ENCODE measurements at regions of chr17 and their contacts with region 1.

Region 1: DNA sequence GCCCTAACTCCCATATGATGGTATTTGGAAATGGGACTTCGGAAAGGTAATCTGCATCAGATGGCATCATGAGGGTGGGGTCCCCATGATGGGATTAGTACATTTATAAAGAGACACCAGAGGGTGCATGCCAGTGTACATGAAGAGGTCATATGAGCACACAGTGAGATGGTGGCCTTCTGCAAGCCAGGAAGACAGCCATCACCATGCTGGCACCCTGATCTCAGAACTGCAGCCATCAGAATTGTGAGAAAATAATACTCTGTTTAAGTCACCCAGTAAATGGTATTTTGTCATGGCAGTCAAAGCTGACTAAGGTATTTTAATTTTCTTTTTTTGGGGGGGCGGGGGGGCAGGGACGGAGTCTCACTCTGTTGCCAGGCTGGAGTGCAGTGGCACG is 47.1 kb upstream of the ABCA10 start:
- DNase-seq: no peak
- ATAC-seq: no peak

Region 2: DNA sequence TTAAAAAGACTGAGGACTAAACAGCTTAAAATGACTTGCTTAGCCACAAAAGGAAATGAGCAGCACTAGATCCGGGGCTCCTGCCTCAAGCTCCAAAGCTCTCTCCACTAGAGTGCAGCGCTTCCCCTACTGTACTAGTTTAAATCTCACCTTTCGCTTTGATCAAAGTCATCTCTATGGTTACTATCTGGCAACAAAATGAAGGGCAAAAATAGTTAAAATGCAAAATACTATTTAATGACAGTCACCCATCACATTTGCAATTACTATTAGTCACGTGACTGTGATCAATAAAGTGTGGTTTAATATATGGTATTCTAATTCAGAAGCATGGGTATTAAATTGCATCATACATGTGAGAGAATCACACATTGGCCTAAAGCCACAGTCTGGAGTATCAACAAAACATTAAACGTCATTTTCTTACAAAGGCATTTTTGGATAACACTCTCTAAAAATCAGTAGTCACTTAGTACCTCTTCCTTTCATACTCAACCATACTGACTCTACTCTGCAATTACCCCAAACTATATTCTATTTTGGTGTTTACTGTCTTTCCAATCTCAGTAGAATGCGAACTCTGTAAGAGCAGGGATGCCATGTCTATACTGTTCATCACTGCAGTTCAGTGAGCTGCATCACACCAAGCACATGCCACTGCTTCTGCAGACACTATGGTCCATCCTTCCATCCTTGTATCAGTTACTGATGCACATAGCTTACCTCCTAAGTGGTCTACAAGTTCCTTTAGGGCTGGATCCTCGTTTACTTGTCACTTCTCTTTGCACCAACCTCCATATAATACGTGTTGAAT is 1915.6 kb before region 1 on chr17:
- intact Hi-C with region 1: loop called (anchors 10 kb)
- DNase-seq: no peak
- ATAC-seq: no peak

Region 3: DNA sequence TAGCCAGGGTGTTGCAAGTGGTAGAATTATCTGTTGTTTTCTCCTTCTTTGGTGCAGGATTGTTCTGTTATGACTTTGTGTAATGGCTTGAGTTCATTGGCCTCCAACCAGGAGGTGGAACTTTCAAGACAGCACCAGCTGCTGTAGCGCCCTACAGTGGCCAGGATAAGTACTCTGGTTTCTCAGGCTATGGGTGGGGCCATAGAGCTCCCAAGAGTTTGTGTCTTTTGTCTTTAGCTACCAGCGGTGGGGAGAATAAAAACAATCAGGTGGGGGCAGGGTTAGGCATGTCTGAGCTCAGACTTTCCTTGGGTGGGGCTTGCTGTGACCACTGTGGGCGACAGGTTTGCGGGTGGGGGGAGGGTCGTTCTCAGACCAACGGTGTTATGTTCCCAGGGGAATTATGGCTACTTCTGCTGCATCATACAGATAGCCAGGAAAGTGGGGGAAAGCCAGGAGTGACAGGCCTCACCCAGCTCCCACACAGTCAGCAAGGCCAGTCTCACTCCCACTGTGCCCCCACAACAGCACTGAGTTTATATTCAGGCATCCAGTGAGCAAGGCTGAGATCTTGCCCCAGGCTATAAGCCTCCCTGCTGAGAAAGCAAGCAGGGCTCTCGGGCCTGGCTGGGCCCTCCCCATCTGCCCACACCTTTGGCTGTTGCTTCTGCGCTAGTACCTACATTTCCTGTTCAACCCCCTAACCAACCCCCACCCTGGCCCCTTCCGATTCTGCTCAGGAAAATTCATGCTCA is 62.5 kb before region 1 on chr17:
- intact Hi-C with region 1: no loop called
- DNase-seq: no peak
- ATAC-seq: peak; percentile 55

Region 4: DNA sequence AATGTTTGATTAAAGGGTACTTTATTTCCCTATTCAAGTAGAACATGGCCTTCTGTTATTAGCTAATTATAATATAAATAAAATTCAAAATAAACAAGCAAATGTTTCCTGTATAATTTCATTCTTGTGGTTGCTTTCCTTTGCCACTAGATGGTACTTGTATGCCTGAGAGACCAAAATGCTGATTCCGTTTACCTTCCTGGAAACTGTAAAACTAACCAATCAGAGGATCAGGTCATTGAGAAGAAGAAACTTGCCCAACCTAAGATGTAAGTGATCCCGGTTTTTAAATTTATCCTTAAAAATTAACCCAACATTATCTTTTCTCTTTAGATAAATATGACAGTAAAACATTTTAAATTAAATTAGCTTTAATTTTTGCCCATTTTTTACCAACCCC is 59.3 kb after region 1 on chr17:
- intact Hi-C with region 1: no loop called
- DNase-seq: no peak
- ATAC-seq: no peak

Measured in sciatic nerve (tissue), 2 donors.